ENCODE measurements at regions of chr1 and their contacts with region 1.

Region 1: GRCh38 chr1:233440951-233441401 is 113.5 kb downstream of the MAP3K21 start:
- ATAC-seq: peak; percentile 48 to 80 (median 58)
- H3K4me3 ChIP-seq: no peak overlapping the region
- H3K27ac ChIP-seq: no peak overlapping the region
- H3K4me1 ChIP-seq: peaks cover 0 to 2% of the 10 kb centered on the region in 2 donors

Region 2: DNA sequence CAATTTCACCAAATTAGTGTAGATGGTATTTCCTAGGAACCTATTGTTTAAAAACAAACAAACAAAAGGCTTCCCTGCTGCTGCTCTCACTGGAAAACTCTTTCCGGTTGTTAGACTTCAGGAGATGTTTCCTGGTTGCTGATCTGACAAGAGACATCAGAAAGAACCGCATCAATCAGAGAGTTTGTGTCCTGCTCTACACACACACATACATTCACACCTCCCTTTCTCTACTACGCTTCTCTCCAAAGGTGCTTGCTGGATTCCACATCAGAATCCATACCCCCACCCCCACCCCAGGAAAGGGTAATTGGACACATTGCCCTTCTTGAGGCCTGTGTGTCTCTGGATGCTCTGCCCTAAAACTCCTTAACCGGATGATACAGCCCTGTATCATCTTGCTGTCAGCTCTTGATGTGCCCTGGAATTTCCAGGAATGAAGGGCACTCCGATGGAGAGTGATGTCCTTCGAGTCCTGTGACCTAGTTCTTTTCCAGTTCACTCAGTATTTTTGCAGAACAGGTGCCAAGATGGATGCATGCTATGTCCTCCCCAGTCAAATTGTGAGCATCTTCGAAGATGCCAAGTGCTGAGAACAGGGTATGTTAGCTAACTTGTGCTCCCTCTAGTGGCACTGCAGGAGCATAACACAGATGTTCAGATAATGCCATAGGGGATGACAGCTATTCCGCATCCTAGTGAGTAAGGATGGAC is 349.8 kb after region 1 on chr1:
- in situ Hi-C with region 1: loop called in 5 of 9 experiments (anchors 25 kb)
- ATAC-seq: peak; percentile 79 to 96 (median 94)
- H3K4me3 ChIP-seq: no peak overlapping the region
- H3K27ac ChIP-seq: no peak overlapping the region
- H3K4me1 ChIP-seq: no peaks in the 10 kb centered on the region

Region 3: GRCh38 chr1:234065794-234066447 is 624.9 kb after region 1 on chr1:
- in situ Hi-C with region 1: loop called in 1 of 9 experiments (anchors 25 kb)
- ATAC-seq: peak in 3 of 8 experiments; percentile 86 to 89 (median 88)
- H3K4me3 ChIP-seq: no peak overlapping the region
- H3K27ac ChIP-seq: no peak overlapping the region
- H3K4me1 ChIP-seq: peaks cover 0 to 5% of the 10 kb centered on the region in 2 donors

Measured in motor neuron (in vitro differentiated cells).